Activated CD8-positive, alpha-beta T cell treated with anti-CD3 and anti-CD28 coated beads, Interleukin-2, amount 10 ng/mL, durations not matched to agents 7 days and 5 days (primary cell): ENCODE measurements at regions of chr12 and their contacts with region 1.

Region 1: GRCh38 chr12:1795785-1796514 is 24.4 kb upstream of the LRTM2 start:
- DNase-seq: peak; percentile 94
- ATAC-seq: peak; percentile 97
- H3K4me3 Mint-ChIP-seq: peak overlapping the region; percentile 86
- H3K27ac Mint-ChIP-seq: peak overlapping the region; percentile 90
- H3K4me1 Mint-ChIP-seq: peaks cover 26% of the 10 kb centered on the region
- H3K27me3 Mint-ChIP-seq: no peaks in the 10 kb centered on the region

Region 2: GRCh38 chr12:1443421-1444141 is 352.4 kb before region 1 on chr12:
- CTCF ChIA-PET with region 1: no interaction called
- POLR2A ChIA-PET with region 1: no interaction called
- DNase-seq: no peak
- ATAC-seq: no peak
- H3K4me3 Mint-ChIP-seq: no peak overlapping the region
- H3K27ac Mint-ChIP-seq: no peak overlapping the region
- H3K4me1 Mint-ChIP-seq: no peaks in the 10 kb centered on the region
- H3K27me3 Mint-ChIP-seq: no peaks in the 10 kb centered on the region

Region 3: DNA sequence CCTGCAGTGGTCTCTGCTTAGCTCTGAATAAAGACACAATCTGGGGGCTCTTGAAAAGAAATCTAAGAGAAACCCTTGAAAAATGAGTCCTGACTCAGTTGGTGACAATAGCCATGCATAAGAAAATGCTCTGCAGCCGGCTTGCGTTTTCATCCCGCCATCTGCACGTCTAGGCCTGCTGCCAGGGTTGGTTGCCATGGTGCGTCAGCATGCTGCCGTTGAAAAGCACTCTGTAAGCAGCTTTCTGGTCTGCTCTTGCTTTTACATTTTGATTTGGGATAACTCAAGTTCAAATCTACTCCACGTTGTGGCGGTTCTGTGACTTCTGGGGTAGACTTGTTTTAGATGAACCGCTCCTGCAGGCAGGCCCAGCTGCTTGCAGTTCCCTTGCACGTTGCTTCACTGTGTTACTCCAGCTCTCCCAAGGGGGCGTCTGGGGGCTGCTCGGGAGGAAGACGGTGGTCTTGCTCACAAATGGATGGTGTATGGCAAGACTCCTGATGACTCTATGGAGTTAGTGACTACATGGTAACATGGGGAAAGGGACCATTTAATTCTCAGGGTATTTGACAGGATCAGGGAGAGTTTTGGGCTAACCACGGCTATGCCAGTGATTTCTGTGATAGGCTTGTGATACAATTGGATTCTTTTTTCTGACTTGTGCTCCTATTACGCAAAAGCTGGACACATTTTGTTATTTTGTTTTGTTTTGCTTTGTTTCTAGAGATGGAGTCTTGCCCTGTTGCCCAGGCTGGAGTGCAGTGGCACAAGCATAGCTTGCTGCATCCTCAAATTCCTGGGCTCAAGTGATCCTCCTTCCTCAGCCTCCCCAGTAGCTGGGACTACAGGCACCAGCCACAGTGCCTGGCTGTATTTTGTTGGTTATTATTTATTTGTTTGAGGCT is 151.2 kb before region 1 on chr12:
- CTCF ChIA-PET with region 1: interaction called, 491 read pairs
- POLR2A ChIA-PET with region 1: no interaction called
- DNase-seq: no peak
- ATAC-seq: no peak
- H3K4me3 Mint-ChIP-seq: no peak overlapping the region
- H3K27ac Mint-ChIP-seq: no peak overlapping the region
- H3K4me1 Mint-ChIP-seq: peaks cover 16% of the 10 kb centered on the region
- H3K27me3 Mint-ChIP-seq: peaks cover 18% of the 10 kb centered on the region

Region 4: GRCh38 chr12:1690578-1691122 is 105.3 kb before region 1 on chr12 and contains the start of gene ADIPOR2:
- CTCF ChIA-PET with region 1: interaction called, 25 read pairs
- POLR2A ChIA-PET with region 1: interaction called, 3 read pairs
- DNase-seq: peak; percentile 95
- ATAC-seq: peak; percentile 98
- H3K4me3 Mint-ChIP-seq: peak within 1 kb of the TSS; percentile 96
- H3K27ac Mint-ChIP-seq: peak within 1 kb of the TSS; percentile 98
- H3K4me1 Mint-ChIP-seq: peaks cover 42% of the 10 kb centered on the region
- H3K27me3 Mint-ChIP-seq: peaks cover 6% of the 10 kb centered on the region
- total RNA-seq, gene ADIPOR2: 64.4 to 68.3 TPM

Region 5: DNA sequence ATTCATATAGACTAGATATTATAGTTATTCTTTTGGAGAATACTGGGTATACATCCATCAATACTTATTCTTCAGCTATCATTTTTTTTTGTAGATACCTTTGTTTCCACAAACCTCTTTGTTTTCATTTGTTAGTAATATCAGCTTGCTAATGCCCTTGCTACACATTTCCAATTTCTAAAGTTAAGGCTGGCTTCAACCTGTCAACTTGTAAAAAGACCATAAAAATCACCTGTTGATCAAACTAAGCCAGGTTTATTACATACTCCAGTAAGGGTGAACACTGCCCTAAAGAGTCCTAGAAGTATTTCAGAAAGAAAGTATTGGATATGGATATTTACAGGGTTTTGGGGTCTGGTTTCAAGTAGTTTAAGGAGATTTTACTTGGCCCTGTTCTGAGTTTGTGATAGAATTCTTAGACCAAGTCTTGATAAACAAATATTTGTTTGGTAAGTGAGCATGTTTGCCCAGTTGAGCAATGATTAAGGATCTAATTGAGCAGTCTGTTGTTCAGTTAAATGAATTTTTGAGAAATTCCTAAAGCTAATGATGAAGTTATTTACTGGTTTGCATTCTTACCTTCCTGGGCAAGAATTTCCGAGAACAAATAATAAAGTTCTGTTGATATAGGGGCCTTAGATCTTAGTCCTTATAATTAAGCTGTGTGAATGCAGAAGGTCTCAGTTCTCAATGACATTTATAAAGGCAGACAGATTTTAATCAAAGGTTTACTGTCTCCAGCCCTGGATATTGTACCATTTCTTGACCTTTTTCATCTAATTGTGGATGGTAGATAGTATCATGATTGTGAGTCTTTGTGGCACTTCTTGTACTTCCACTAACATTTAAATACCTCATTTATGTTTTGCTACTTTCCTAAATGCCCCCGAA is 28.3 kb before region 1 on chr12:
- CTCF ChIA-PET with region 1: interaction called, 13 read pairs
- POLR2A ChIA-PET with region 1: no interaction called
- DNase-seq: no peak
- ATAC-seq: no peak
- H3K4me3 Mint-ChIP-seq: no peak overlapping the region
- H3K27ac Mint-ChIP-seq: no peak overlapping the region
- H3K4me1 Mint-ChIP-seq: no peaks in the 10 kb centered on the region
- H3K27me3 Mint-ChIP-seq: no peaks in the 10 kb centered on the region

Region 6: GRCh38 chr12:1781772-1782171 is 14.2 kb before region 1 on chr12:
- CTCF ChIA-PET with region 1: interaction called, 22 read pairs
- POLR2A ChIA-PET with region 1: interaction called, 3 read pairs
- DNase-seq: no peak
- ATAC-seq: no peak
- H3K4me3 Mint-ChIP-seq: no peak overlapping the region
- H3K27ac Mint-ChIP-seq: no peak overlapping the region
- H3K4me1 Mint-ChIP-seq: no peaks in the 10 kb centered on the region
- H3K27me3 Mint-ChIP-seq: no peaks in the 10 kb centered on the region